ENCODE measurements at regions of chr10 and their contacts with region 1.

Region 1: GRCh38 chr10:74156919-74157289 is 5.9 kb downstream of the ADK start:
- DNase-seq: no peak
- H3K4me3 ChIP-seq: no peak overlapping the region
- H3K27ac ChIP-seq: no peak overlapping the region
- H3K4me1 ChIP-seq: peaks cover 20% of the 10 kb centered on the region
- H3K27me3 ChIP-seq: no peaks in the 10 kb centered on the region
- CTCF ChIP-seq: no peak

Region 2: DNA sequence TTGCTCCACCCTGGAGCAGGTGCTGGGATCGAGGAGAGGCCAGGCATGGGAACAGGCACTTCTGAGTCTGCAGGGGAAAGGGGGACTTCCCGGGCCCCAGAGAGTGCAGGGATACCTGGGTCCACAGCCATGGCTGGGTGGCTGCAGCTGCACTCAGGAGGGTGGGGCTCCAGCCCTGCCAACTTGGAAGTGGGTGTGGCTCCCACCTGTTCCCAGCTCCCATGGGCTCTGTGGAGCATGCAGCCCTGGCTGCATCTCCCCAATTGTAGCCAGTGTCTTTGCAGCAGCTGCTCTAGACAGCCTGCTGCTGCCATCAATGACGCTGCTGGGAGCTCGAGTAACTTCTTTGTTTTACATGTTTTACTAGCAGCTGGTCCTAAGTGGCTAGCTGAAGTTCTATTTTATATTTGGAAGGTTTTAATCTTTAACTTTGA is 51.2 kb after region 1 on chr10:
- CTCF ChIA-PET with region 1: no interaction called
- dilution Hi-C with region 1: loop called (anchors 5 kb)
- in situ Hi-C with region 1: no loop called
- intact Hi-C with region 1: no loop called
- DNase-seq: no peak
- H3K4me3 ChIP-seq: no peak overlapping the region
- H3K27ac ChIP-seq: no peak overlapping the region
- H3K4me1 ChIP-seq: peaks cover 28% of the 10 kb centered on the region
- H3K27me3 ChIP-seq: no peaks in the 10 kb centered on the region
- CTCF ChIP-seq: no peak

Measured in mammary epithelial cell (primary cell).